ENCODE measurements at regions of chr1 and their contacts with region 1.

Region 1: GRCh38 chr1:26284597-26285360 is 4.9 kb downstream of the SH3BGRL3 start:
- DNase-seq: peak; percentile 69 to 91 (median 82)
- ATAC-seq: peak; percentile 23 to 49 (median 38)
- H3K4me3 ChIP-seq: peak overlapping the region in 1 of 12 donors; percentile 34
- H3K27ac ChIP-seq: peak overlapping the region in 11 of 12 donors; percentile 36 to 98 (median 53)
- H3K4me1 ChIP-seq: peaks cover 9 to 93% (median 49%) of the 10 kb centered on the region in 12 donors
- H3K27me3 ChIP-seq: no peaks in the 10 kb centered on the region
- CTCF ChIP-seq: peak; percentile 59 to 81 (median 74)
- POLR2A ChIP-seq: no peak

Region 2: GRCh38 chr1:25952841-25953401 is 331.9 kb before region 1 on chr1:
- intact Hi-C with region 1: no loop called
- DNase-seq: peak; percentile 58 to 74 (median 66)
- ATAC-seq: peak; percentile 79 to 91 (median 90)
- H3K4me3 ChIP-seq: no peak overlapping the region
- H3K27ac ChIP-seq: no peak overlapping the region
- H3K4me1 ChIP-seq: peaks cover 0 to 7% (median 0%) of the 10 kb centered on the region in 12 donors
- H3K27me3 ChIP-seq: no peaks in the 10 kb centered on the region
- CTCF ChIP-seq: no peak
- POLR2A ChIP-seq: no peak

Region 3: GRCh38 chr1:26302733-26303405 is 18.1 kb after region 1 on chr1:
- intact Hi-C with region 1: loop called in 1 of 10 experiments (anchors 2 kb)
- DNase-seq: peak in 3 of 5 donors; percentile 57 to 61 (median 57)
- ATAC-seq: peak in 3 of 4 donors; percentile 29 to 63 (median 39)
- H3K4me3 ChIP-seq: no peak overlapping the region
- H3K27ac ChIP-seq: peak overlapping the region in 7 of 12 donors; percentile 0 to 64 (median 18)
- H3K4me1 ChIP-seq: peaks cover 3 to 52% (median 16%) of the 10 kb centered on the region in 12 donors
- H3K27me3 ChIP-seq: no peaks in the 10 kb centered on the region
- CTCF ChIP-seq: no peak
- POLR2A ChIP-seq: no peak

Region 4: DNA sequence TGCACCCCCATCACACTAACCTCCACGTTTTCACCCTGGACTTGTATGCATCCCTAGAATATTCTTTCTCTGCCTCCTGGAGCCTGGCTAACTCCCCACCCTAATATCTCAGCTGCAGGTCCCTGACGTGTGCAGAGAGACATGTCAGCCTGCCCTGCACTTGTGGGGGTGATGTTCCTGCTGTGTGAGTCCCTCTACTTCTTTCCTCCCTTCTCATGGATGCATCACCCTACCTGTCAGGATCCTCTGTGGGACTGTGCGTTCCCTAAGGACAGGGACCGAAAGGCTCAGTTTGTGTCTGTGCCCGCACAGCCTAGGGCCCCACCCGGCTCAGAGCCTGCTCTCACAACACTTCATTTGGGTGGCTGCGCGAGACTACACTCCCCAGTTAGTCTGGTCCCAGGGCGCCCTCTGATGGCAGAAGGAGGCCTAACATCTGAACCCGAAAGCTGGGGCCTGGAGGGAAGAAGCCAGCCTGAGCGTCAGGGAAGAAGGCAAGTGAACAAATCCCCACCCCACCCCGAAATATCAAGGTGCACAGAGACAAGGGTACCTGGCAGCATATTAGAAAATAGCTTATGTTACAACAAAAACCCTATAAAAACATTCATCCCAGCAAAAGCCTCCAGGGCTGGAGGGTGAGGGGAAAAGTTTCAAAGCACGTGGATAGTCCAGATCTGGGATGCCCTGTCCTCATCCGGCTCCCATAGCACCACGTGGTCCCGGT is 36.7 kb after region 1 on chr1:
- intact Hi-C with region 1: loop called in 7 of 10 experiments (anchors 1 to 5 kb)
- DNase-seq: peak; percentile 89 to 95 (median 92)
- ATAC-seq: peak; percentile 82 to 94 (median 92)
- H3K4me3 ChIP-seq: peak overlapping the region in 2 of 12 donors; percentile 30 to 34
- H3K27ac ChIP-seq: peak overlapping the region in 1 of 12 donors; percentile 60
- H3K4me1 ChIP-seq: peaks cover 0 to 47% (median 7%) of the 10 kb centered on the region in 12 donors
- H3K27me3 ChIP-seq: no peaks in the 10 kb centered on the region
- CTCF ChIP-seq: peak; percentile 81 to 92 (median 90)
- POLR2A ChIP-seq: no peak

Region 5: DNA sequence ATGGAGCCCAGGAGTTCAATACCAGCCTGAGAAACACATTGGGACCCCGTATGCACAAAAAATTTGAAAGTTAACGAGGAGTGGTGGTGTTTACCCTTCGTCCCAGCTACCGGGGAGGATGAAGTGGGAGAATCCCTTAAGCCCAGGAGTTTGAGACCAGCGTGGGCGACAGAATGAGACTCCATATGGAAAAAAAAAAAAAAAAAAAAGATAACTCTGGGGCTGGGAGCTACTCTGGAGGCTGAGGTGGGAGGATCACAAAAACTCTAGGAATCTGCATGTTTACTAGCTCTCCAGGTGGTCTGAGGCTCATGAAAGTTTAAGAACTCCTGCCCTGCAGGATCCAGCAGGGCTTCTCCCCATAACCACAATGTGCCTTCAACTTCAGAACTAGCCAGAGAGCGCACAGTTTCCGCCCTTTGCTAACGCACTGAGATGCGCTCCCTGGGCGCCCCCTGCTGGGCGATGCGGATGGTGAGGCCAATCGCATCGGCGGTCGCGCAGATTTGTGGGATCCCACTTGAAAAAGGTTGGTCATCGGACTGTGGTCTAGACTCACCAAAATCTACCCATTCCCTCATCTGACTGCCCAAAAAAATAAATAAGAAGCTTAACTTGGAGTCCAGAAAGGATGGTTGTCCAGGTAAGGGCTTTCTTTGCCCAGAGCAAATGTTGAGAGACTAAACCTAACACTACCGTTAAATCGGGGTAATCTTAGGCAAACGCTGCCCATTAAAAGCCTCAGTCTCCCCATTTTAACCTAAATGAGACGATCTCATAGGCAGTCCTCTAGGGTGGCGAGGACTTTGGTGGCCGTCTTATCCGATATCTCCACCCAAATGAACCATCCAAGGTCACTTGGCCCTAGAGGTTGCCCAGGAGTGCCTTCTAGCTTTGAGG is 79.0 kb after region 1 on chr1:
- intact Hi-C with region 1: loop called in 3 of 10 experiments (anchors 5 kb)
- DNase-seq: peak; percentile 70 to 89 (median 78)
- ATAC-seq: peak; percentile 50 to 80 (median 71)
- H3K4me3 ChIP-seq: no peak overlapping the region
- H3K27ac ChIP-seq: no peak overlapping the region
- H3K4me1 ChIP-seq: peaks cover 0 to 19% (median 8%) of the 10 kb centered on the region in 12 donors
- H3K27me3 ChIP-seq: peaks cover 17 to 57% (median 28%) of the 10 kb centered on the region in 9 donors
- CTCF ChIP-seq: peak; percentile 65 to 94 (median 86)
- POLR2A ChIP-seq: no peak